Mammary epithelial cell (primary cell): ENCODE measurements at regions of chr10 and their contacts with region 1.

Region 1: DNA sequence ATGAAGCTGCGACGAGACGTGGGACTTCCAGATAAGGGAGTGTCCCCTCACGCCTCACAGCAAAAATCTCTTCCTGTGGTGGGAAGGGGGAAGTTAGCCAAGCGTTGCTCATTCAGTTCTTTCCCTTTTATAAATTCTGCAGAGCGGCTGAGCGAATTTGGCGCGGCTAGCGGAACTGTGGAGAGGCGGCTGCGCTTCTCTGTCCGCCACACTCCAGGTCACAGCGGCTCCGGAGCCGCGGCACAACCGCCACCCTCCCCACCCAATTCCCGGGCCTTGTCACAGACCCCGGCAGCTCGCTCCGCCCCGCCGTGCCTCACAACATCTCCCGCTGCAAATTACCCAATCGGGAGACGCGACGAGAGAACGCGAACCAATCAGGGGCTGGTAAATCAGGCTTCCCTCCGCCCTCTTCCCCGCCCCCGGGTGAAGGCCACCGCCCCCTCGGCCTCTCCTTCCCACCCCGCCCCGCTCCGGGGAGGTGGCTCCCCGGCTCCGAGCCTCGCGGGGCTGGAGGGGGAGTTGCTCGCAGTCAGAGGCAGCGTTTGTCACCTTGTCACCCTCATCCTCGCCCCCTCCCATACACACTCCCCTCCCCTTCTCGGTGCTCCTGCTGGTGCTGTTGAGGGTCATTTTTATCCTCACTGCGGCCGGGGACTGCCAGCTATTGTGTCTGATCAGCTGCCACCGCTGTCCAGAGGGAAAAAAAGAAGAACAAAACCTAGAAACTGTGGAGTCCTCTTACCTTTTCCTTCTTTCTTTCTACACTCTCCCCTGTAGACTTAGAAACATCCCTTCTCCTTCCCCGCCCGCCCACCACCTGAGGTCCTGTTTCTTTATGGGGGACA is 918 bp upstream of the ARHGAP21 start:
- DNase-seq: peak; percentile 96
- H3K4me3 ChIP-seq: peak overlapping the region; percentile 66 to 82 (median 70)
- H3K27ac ChIP-seq: peak overlapping the region; percentile 86
- H3K4me1 ChIP-seq: peaks cover 5% of the 10 kb centered on the region
- H3K27me3 ChIP-seq: no peaks in the 10 kb centered on the region
- CTCF ChIP-seq: no peak

Region 2: GRCh38 chr10:24415455-24416125 is 309.0 kb before region 1 on chr10:
- CTCF ChIA-PET with region 1: no interaction called
- dilution Hi-C with region 1: no loop called
- in situ Hi-C with region 1: no loop called
- intact Hi-C with region 1: no loop called
- DNase-seq: peak; percentile 27
- H3K4me3 ChIP-seq: no peak overlapping the region
- H3K27ac ChIP-seq: no peak overlapping the region
- H3K4me1 ChIP-seq: peaks cover 11% of the 10 kb centered on the region
- H3K27me3 ChIP-seq: no peaks in the 10 kb centered on the region
- CTCF ChIP-seq: no peak

Region 3: DNA sequence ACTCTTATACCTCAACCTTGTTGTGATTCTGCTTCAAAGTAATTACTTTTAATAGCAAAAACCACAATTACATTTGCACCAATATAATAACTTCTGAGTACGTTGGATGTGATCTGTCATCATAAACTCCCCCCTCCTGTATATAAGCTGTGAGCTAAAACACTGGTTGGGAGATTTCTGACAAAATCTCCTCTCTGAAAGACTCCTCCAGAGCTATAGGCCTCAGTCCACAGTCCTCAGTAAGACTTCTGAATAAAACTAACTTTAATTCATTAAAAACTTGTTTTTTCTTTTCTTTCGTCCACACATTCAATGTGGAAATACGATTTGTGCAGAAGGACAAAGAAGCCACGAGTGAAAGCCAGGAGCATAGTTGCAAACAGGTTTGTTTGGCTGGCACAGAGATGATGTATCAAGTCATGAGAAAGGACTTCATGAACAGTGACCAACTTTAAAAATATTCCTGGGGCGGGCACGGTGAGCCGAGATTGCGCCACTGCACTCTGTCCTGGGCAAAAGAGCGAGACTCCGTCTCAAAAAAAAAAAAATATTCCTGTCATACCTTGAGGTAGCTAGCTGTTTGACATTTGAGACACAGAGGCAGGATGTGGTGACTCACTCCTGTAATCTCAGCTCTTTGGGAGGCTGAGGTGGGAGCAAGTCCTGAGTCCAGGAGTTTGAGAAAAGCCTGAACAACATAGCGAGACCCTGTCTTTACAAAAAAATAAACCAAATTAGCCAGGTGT is 90.1 kb after region 1 on chr10:
- CTCF ChIA-PET with region 1: no interaction called
- dilution Hi-C with region 1: no loop called
- in situ Hi-C with region 1: no loop called
- intact Hi-C with region 1: loop called (anchors 2 kb)
- DNase-seq: peak; percentile 95
- H3K4me3 ChIP-seq: no peak overlapping the region
- H3K27ac ChIP-seq: peak overlapping the region; percentile 88
- H3K4me1 ChIP-seq: peaks cover 37% of the 10 kb centered on the region
- H3K27me3 ChIP-seq: no peaks in the 10 kb centered on the region
- CTCF ChIP-seq: no peak

Region 4: DNA sequence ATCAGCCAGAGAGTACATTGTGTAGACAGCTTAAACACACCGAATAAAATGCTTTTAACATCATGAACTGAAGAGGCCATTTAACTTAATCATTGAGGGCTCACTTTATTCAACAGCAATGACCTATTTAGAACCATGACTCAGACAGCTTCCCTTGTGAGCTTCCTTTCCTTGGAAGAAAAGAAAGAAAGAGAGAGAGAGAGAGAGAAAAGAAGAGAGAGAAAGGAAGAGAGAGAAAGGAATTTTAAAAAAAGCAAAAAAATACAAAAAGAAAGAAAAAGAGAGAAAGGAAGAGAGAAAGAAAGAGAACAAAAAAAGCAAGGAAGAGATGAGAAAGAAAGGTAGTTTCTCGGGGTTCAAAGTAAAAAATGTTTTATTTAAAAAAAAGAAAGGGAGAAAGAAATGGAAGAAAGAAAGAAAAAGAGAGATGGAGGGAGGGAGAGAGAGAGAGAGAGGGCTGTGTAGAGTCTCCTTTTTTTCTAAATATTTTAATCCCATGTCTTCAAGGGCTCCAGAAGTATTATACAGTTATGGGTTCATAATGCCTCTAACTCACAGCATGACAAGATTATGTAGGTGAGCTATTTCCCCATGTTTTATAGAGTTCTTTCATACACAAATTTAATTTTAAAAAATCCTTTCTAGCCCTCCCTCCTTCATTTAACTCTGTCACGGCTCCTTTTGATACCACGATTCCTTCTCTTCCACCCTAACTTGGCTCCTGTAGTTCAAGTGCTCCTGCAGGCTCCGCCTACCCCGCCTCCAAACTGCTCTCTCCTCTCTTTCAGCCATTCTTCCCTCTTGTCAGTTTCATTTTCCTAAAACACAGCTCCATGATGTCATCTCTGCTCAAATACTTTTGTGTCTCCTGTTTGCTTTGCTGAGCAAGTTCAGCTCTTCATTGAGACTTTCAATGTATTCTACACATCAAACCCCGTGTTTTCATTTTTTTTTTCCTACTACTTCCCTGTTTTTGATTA is 142.3 kb after region 1 on chr10:
- CTCF ChIA-PET with region 1: no interaction called
- dilution Hi-C with region 1: no loop called
- in situ Hi-C with region 1: no loop called
- intact Hi-C with region 1: loop called (anchors 5 kb)
- DNase-seq: peak; percentile 64
- H3K4me3 ChIP-seq: no peak overlapping the region
- H3K27ac ChIP-seq: peak overlapping the region; percentile 42
- H3K4me1 ChIP-seq: peaks cover 26% of the 10 kb centered on the region
- H3K27me3 ChIP-seq: no peaks in the 10 kb centered on the region
- CTCF ChIP-seq: no peak

Region 5: DNA sequence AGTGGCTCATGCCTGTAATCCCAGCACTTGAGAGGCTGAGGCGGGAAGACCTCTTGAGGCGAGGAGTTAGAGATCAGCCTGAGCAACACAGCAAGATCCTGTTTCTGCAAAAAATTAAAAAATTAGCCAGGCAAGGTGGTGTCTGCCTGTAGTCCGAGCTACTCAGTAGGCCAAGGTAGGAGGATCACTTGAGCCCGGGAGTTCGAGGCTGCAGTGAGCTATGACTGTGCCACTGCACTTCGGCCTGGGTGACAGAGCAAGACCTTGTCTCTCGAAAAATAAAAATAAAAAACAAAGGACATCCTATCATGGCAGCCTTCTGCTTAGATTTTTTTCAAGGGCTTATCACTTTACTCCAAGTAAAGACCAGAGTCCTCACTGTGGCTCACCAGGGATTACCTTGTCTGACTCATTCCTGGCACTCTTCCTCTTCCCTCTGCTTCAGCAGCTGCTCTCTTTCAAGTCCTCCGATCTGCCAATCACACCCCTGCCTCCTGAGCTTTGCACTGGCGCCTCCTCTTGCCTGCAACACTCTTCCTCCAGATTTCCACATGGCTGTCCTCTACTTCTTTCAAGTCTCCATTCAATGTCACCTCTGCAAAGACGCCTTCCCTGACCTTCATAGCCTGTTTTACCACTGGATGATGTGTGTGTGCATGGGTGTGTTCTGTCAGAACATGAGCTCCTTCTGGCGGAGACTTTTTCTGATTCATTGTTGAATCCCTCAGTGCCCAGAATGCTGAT is 220.1 kb after region 1 on chr10:
- CTCF ChIA-PET with region 1: no interaction called
- dilution Hi-C with region 1: no loop called
- in situ Hi-C with region 1: no loop called
- intact Hi-C with region 1: loop called (anchors 1 kb)
- DNase-seq: peak; percentile 86
- H3K4me3 ChIP-seq: no peak overlapping the region
- H3K27ac ChIP-seq: no peak overlapping the region
- H3K4me1 ChIP-seq: peaks cover 23% of the 10 kb centered on the region
- H3K27me3 ChIP-seq: no peaks in the 10 kb centered on the region
- CTCF ChIP-seq: peak; percentile 16 to 44

Region 6: DNA sequence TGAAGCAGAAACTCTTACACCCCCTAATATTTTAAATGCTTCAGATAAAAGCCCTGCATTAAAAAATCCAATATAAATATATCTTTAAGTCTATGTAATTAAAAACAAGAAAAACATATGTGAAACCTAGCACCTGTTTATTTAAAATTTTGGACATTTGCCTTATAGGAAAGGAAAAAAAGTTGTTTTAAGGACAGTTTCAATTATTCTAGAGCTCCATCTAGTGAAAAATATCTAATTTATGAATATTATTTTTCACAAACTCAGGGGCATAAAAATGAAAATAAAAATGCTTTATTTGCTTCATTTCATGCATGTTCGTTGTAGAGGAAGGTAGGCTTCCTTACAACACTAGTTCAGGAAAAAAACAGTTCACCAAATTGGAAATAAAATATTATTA is 265.3 kb after region 1 on chr10:
- CTCF ChIA-PET with region 1: interaction called, 5 read pairs
- dilution Hi-C with region 1: no loop called
- in situ Hi-C with region 1: no loop called
- intact Hi-C with region 1: loop called (anchors 2 kb)
- DNase-seq: no peak
- H3K4me3 ChIP-seq: no peak overlapping the region
- H3K27ac ChIP-seq: no peak overlapping the region
- H3K4me1 ChIP-seq: no peaks in the 10 kb centered on the region
- H3K27me3 ChIP-seq: no peaks in the 10 kb centered on the region
- CTCF ChIP-seq: no peak

Region 7: GRCh38 chr10:25059764-25060389 is 335.3 kb after region 1 on chr10:
- CTCF ChIA-PET with region 1: no interaction called
- dilution Hi-C with region 1: no loop called
- in situ Hi-C with region 1: no loop called
- intact Hi-C with region 1: loop called (anchors 5 kb)
- DNase-seq: peak; percentile 91
- H3K4me3 ChIP-seq: no peak overlapping the region
- H3K27ac ChIP-seq: peak overlapping the region; percentile 73
- H3K4me1 ChIP-seq: peaks cover 33% of the 10 kb centered on the region
- H3K27me3 ChIP-seq: no peaks in the 10 kb centered on the region
- CTCF ChIP-seq: no peak